ENCODE measurements at regions of chr1 and their contacts with region 1.

Region 1: GRCh38 chr1:33295450-33296081 is 25.3 kb downstream of the A3GALT2 start:
- DNase-seq: peak; percentile 85
- H3K4me3 ChIP-seq: no peak overlapping the region
- H3K27ac ChIP-seq: no peak overlapping the region
- H3K4me1 ChIP-seq: peaks cover 3% of the 10 kb centered on the region
- H3K27me3 ChIP-seq: no peaks in the 10 kb centered on the region

Region 2: GRCh38 chr1:32828341-32828740 is 467.2 kb before region 1 on chr1:
- in situ Hi-C with region 1: no loop called
- DNase-seq: peak; percentile 22
- H3K4me3 ChIP-seq: no peak overlapping the region
- H3K27ac ChIP-seq: no peak overlapping the region
- H3K4me1 ChIP-seq: no peaks in the 10 kb centered on the region
- H3K27me3 ChIP-seq: no peaks in the 10 kb centered on the region

Region 3: GRCh38 chr1:33007190-33008050 is 288.1 kb before region 1 on chr1:
- in situ Hi-C with region 1: no loop called
- DNase-seq: peak; percentile 96
- H3K4me3 ChIP-seq: no peak overlapping the region
- H3K27ac ChIP-seq: no peak overlapping the region
- H3K4me1 ChIP-seq: peaks cover 32% of the 10 kb centered on the region
- H3K27me3 ChIP-seq: no peaks in the 10 kb centered on the region

Region 4: GRCh38 chr1:33055210-33056008 is 240.2 kb before region 1 on chr1:
- in situ Hi-C with region 1: no loop called
- DNase-seq: peak; percentile 82
- H3K4me3 ChIP-seq: no peak overlapping the region
- H3K27ac ChIP-seq: no peak overlapping the region
- H3K4me1 ChIP-seq: peaks cover 4% of the 10 kb centered on the region
- H3K27me3 ChIP-seq: no peaks in the 10 kb centered on the region

Region 5: GRCh38 chr1:33367485-33368405 is 72.2 kb after region 1 on chr1:
- in situ Hi-C with region 1: loop called (anchors 5 kb)
- DNase-seq: peak; percentile 91
- H3K4me3 ChIP-seq: no peak overlapping the region
- H3K27ac ChIP-seq: no peak overlapping the region
- H3K4me1 ChIP-seq: peaks cover 10% of the 10 kb centered on the region
- H3K27me3 ChIP-seq: no peaks in the 10 kb centered on the region

Region 6: DNA sequence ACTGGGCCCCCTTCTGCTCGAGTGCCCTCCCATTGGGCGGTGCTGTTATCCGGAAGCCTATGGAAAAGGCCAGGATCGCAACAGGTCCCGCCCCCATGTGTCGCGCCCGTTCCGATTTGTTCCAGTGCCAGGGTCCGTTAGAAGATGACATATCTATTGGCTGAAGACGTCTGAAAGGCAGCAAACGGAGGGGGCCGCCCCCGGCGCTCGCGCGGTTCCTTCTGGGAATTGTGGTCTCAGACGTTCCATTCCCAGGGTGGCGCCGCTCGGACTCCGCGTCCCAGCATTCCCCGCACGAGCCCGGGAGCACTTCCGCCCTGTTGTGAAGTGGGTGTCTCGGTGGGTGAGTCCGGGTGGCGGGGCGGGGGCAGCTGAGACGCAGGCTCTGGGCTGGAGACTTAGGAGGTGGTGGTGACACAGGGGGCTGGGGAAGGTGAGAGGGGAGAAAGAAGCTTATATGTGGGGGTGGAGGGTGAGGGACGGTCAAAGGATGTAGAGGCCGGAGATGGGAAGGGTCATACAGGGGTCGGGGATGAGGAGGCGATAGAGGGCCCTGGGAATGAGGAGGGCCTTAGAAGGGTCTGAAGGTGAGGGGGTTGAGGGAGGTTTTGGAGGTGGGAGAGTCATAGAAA is 176.9 kb after region 1 on chr1 and contains the start of gene ZSCAN20:
- in situ Hi-C with region 1: loop called (anchors 25 kb)
- DNase-seq: peak; percentile 99
- H3K4me3 ChIP-seq: peak within 1 kb of the TSS; percentile 88
- H3K27ac ChIP-seq: peak within 1 kb of the TSS; percentile 60
- H3K4me1 ChIP-seq: peaks cover 33% of the 10 kb centered on the region
- H3K27me3 ChIP-seq: no peaks in the 10 kb centered on the region
- total RNA-seq, gene ZSCAN20: 4.6 and 9.5 TPM in 2 replicates